Activated T-helper 2 cell treated with anti-CD3 and anti-CD28 coated beads, Interferon-gamma antibody, Interleukin-2, Interleukin-4, amounts not matched to agents 10 μg/mL and 5 μg/mL and 100 μg/mL, durations not matched to agents 14 hours and 24 hours and 36 hours (primary cell): ENCODE measurements at regions of chr19 and their contacts with region 1.

Region 1: GRCh38 chr19:13150187-13150930 is at the starts of genes IER2 and STX10:
- DNase-seq: peak; percentile 93
- H3K4me3 Mint-ChIP-seq: peak within 1 kb of the TSS; percentile 96
- H3K27ac Mint-ChIP-seq: peak within 1 kb of the TSS; percentile 93
- H3K4me1 Mint-ChIP-seq: peaks cover 17% of the 10 kb centered on the region
- H3K27me3 Mint-ChIP-seq: no peaks in the 10 kb centered on the region
- total RNA-seq, gene IER2: 140 and 143 TPM in 2 replicates
- total RNA-seq, gene STX10: 68.9 and 69.1 TPM in 2 replicates

Region 2: GRCh38 chr19:12938234-12939025 is 211.9 kb before region 1 on chr19 and contains the start of gene CALR:
- intact Hi-C with region 1: loop called (anchors 2 kb)
- DNase-seq: peak; percentile 99
- H3K4me3 Mint-ChIP-seq: peak within 1 kb of the TSS; percentile 99
- H3K27ac Mint-ChIP-seq: peak within 1 kb of the TSS; percentile 84
- H3K4me1 Mint-ChIP-seq: peaks cover 47% of the 10 kb centered on the region
- H3K27me3 Mint-ChIP-seq: no peaks in the 10 kb centered on the region
- total RNA-seq, gene CALR: 984 and 991 TPM in 2 replicates

Region 3: GRCh38 chr19:13117772-13118423 is 32.5 kb before region 1 on chr19 and contains the start of gene NACC1:
- intact Hi-C with region 1: loop called (anchors 1 kb)
- DNase-seq: peak; percentile 87
- H3K4me3 Mint-ChIP-seq: peak within 1 kb of the TSS; percentile 94
- H3K27ac Mint-ChIP-seq: peak within 1 kb of the TSS; percentile 95
- H3K4me1 Mint-ChIP-seq: peaks cover 40% of the 10 kb centered on the region
- H3K27me3 Mint-ChIP-seq: no peaks in the 10 kb centered on the region
- total RNA-seq, gene NACC1: 117 and 132 TPM in 2 replicates

Region 4: DNA sequence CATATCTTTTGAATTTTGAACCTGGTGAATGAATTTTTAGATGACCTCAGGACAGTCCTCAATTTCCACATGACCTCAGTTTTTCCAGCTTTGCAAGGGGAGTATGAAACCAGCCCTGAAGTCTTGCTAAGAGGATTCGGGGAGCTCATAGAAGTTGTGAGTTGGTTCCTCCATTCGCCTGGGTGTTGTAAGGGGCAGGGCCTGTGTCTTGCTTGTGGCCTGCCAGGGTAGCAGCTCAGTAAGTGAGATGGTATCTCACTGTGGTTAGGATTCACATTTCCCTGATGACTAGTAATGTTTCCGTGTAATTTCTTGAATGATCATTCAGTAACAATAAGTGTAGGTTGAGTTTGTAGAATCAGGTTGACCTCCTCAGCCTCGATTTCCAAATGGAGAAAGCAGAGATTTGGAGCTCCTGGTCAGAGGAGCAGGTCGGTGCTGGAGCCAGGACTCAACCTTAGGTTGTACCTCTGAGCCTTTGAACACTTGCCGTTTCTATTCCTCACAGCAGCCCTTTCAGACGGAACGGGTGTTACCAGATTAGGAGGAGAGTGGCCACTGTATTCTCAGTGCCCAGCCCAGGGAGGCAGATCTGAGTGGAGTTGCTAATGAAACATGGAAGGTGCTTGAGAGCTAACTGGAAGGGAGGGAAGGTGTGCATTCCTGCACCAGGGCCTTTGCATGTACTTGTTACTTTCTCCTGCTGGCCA is 17.7 kb before region 1 on chr19:
- intact Hi-C with region 1: loop called (anchors 1 kb)
- DNase-seq: peak; percentile 70
- H3K4me3 Mint-ChIP-seq: peak overlapping the region; percentile 78
- H3K27ac Mint-ChIP-seq: peak overlapping the region; percentile 98
- H3K4me1 Mint-ChIP-seq: peaks cover 42% of the 10 kb centered on the region
- H3K27me3 Mint-ChIP-seq: no peaks in the 10 kb centered on the region

Region 5: GRCh38 chr19:13162518-13163314 is 12.4 kb after region 1 on chr19:
- intact Hi-C with region 1: loop called (anchors 1 kb)
- DNase-seq: peak; percentile 89
- H3K4me3 Mint-ChIP-seq: peak overlapping the region; percentile 86
- H3K27ac Mint-ChIP-seq: peak overlapping the region; percentile 95
- H3K4me1 Mint-ChIP-seq: peaks cover 47% of the 10 kb centered on the region
- H3K27me3 Mint-ChIP-seq: no peaks in the 10 kb centered on the region

Region 6: GRCh38 chr19:13212759-13213330 is 62.5 kb after region 1 on chr19:
- intact Hi-C with region 1: loop called (anchors 2 kb)
- DNase-seq: peak; percentile 55
- H3K4me3 Mint-ChIP-seq: no peak overlapping the region
- H3K27ac Mint-ChIP-seq: no peak overlapping the region
- H3K4me1 Mint-ChIP-seq: peaks cover 13% of the 10 kb centered on the region
- H3K27me3 Mint-ChIP-seq: no peaks in the 10 kb centered on the region

Region 7: GRCh38 chr19:13334801-13335481 is 184.6 kb after region 1 on chr19:
- intact Hi-C with region 1: no loop called
- DNase-seq: no peak
- H3K4me3 Mint-ChIP-seq: no peak overlapping the region
- H3K27ac Mint-ChIP-seq: no peak overlapping the region
- H3K4me1 Mint-ChIP-seq: no peaks in the 10 kb centered on the region
- H3K27me3 Mint-ChIP-seq: no peaks in the 10 kb centered on the region

Region 8: DNA sequence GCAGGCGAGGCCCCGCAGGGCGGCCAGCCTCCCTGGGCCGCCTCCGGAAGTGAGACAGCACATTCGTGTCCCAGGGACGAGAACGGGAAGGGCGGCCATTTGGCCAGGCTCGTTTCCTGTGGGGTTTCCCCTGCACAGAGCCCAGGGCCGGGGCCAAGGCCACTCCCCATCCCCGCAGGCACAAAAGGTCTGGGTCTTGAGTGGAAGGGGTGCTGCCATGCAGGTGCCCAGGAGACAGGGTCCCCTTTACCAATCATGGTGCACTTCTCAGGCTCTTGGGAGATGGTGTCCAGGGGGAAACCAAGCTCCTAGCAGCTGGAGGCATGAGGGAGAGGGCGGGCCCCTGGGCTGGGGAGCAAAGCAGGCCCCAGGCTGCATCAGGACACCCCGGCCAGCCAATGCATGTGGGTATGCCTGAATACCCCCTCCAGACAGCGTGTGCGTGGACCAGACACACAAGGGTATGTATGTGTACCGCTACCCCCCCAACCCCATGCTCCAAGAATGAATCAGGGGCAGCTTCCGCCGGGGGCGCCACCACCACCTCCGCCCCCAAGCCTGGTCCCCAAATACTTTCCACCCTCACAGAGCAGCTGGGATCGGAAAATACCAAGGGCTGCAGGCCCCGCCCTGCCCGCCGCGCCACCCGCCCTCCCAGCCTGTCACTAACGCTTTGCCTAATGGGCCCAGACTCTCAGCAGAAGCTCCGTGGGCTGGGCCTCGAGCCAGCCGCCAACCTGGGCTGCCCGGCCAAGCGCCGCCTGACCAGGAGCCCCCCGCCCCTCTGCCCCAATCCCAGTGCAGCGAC is 689.0 kb after region 1 on chr19:
- intact Hi-C with region 1: loop called (anchors 5 kb)
- DNase-seq: peak; percentile 77
- H3K4me3 Mint-ChIP-seq: peak overlapping the region; percentile 92
- H3K27ac Mint-ChIP-seq: peak overlapping the region; percentile 90
- H3K4me1 Mint-ChIP-seq: peaks cover 29% of the 10 kb centered on the region
- H3K27me3 Mint-ChIP-seq: no peaks in the 10 kb centered on the region